ENCODE measurements at regions of chr9 and their contacts with region 1.

Region 1: DNA sequence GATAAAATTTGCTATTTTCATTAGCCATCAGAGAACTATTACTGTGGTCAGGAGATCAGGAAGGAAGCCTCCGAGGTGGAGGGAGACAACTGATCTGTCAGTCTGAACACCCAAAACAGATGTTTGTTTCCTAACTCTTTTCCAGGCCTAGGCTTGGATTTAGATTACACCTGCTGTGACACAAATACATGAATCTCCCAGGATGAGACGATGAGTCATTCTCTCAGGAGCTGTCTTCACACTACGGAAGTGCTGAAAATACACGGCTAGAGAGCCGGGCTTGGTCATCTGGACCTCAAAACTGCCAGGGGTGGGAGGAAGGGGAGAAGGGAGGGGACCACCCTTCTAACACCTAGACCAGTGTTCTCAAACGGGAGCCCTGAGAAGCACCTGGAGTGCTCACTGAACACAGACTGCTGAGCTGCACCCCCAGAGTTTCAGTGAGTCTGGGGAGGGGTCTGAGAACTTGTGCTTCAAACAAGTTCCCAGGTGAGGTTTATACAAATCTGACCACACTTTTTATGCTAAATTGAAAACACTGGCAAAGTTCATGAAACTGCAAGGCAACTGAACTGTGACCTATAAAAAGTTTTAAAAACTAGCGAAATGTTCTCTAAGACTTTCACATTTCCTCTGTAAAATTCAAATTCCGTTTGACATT is 80.3 kb upstream of the EQTN start:
- DNase-seq: no peak
- ATAC-seq: peak; percentile 93 to 95 (median 94)
- H3K4me3 ChIP-seq: peak overlapping the region; percentile 16
- H3K27ac ChIP-seq: peak overlapping the region; percentile 77
- H3K4me1 ChIP-seq: peaks cover 33% of the 10 kb centered on the region
- H3K27me3 ChIP-seq: no peaks in the 10 kb centered on the region
- CTCF ChIP-seq: no peak

Region 2: DNA sequence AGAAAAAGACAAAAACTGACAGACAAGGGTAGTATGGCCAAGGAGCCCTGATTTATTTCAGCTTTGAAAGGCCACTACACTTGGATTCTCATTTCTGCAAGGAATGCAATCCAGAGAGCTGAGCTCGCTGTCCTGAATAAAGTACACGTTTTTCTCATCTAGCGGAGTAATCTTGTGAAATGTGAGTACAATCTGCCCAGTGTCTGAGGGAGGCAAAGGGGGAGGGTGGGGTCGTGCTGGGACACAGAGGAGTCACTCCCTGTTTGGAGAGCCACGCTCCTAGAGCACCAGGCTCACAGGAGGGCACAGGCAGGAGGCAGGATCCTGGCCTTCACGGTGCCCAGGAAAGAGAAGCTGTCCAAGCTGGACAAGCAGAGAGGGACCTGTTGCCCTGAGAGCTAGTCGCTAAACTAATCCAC is 95.8 kb after region 1 on chr9:
- intact Hi-C with region 1: loop called in 1 of 2 experiments (anchors 10 kb)
- DNase-seq: peak; percentile 65 to 81
- ATAC-seq: peak; percentile 63 to 95 (median 83)
- H3K4me3 ChIP-seq: no peak overlapping the region
- H3K27ac ChIP-seq: no peak overlapping the region
- H3K4me1 ChIP-seq: peaks cover 22% of the 10 kb centered on the region
- H3K27me3 ChIP-seq: no peaks in the 10 kb centered on the region
- CTCF ChIP-seq: no peak

Region 3: GRCh38 chr9:27561685-27562084 is 184.4 kb after region 1 on chr9:
- intact Hi-C with region 1: no loop called
- DNase-seq: no peak
- ATAC-seq: no peak
- H3K4me3 ChIP-seq: no peak overlapping the region
- H3K27ac ChIP-seq: no peak overlapping the region
- H3K4me1 ChIP-seq: no peaks in the 10 kb centered on the region
- H3K27me3 ChIP-seq: no peaks in the 10 kb centered on the region
- CTCF ChIP-seq: no peak